H1 (cell line): ENCODE measurements at regions of chr13 and their contacts with region 1.

Region 1: GRCh38 chr13:47549219-47549752 is 451.8 kb downstream of the SUCLA2 start:
- DNase-seq: no peak
- H3K4me3 ChIP-seq: no peak overlapping the region
- H3K27ac ChIP-seq: no peak overlapping the region
- H3K4me1 ChIP-seq: peaks cover 0 to 3% (median 1%) of the 10 kb centered on the region in 4 experiments; a peak in 2 of 7 replicates
- H3K27me3 ChIP-seq: no peaks in the 10 kb centered on the region; a peak in 1 of 7 replicates
- CTCF ChIP-seq: peak in 2 of 3 experiments; percentile 15 to 31; a peak in 2 of 4 replicates
- EP300 ChIP-seq: no peak
- POLR2A ChIP-seq: no peak
- RAD21 ChIP-seq: peak; percentile 25 to 44; a peak in 3 of 4 replicates

Region 2: DNA sequence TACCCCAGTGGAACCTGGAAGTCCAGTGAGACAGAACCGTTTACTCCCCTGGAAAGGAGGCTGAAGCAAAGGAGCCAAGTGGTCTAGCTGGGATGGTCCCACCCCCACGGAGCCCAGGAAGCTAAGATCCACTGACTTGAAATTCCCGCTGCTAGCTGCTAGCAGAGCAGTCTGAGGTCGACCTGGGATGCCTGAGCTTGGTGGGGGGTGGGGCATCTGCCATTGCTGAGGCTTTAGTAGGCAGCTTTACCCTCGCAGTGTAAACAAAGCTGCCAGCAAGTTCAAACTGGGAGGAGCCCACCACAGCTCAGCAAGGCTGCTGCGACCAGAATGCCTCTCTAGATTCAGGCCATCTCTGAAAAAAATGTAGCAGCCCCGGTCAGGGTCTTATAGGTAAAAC is 14.8 kb after region 1 on chr13:
- CTCF ChIA-PET with region 1: interaction called, 12 read pairs
- POLR2A ChIA-PET with region 1: no interaction called
- DNase-seq: peak; percentile 19 to 50
- H3K4me3 ChIP-seq: no peak overlapping the region
- H3K27ac ChIP-seq: no peak overlapping the region
- H3K4me1 ChIP-seq: peaks cover 0 to 5% (median 1%) of the 10 kb centered on the region in 4 experiments; a peak in 4 of 7 replicates
- H3K27me3 ChIP-seq: no peaks in the 10 kb centered on the region
- CTCF ChIP-seq: no peak
- EP300 ChIP-seq: no peak
- POLR2A ChIP-seq: no peak
- RAD21 ChIP-seq: no peak